AG04450 (cell line): ENCODE measurements at regions of chr6 and their contacts with region 1.

Region 1: DNA sequence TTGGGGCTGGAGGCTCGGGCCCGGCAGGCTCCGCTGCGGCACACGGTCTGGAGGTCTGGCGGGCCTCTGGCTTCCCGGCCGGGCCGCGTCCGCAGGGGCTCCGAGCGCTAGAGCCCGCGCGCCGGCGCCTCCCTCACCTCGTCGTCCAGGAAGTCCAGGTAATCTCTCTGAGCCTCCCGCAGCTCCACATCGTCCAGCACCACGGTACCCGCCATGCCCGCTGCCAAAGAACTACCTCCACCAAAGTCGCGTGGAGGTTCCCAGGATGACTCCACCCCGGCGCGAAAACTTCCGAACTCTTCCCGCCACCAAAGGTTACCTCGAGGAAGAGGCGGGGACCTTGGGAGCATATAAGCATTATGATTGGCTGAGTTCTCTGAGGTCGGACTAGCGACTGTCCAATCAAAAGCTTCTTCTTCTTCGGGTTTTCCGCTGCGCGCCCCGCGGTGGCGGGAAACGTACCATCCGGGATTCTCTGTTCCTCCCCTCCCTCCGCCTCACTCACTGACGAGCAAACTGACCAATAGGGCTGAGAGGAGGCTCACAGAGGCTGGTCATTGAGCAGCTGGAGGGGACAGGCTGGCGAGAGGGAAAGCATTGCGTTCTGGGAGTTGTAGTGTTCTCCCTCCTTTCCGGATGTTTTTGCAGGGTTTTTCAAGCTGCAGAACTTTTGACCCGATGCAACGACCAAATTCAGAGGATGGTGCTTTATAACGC is at the start of gene MCM3:
- DNase-seq: peak; percentile 98
- H3K4me3 ChIP-seq: peak within 1 kb of the TSS; percentile 83
- H3K27ac ChIP-seq: no peak within 1 kb of the TSS
- H3K27me3 ChIP-seq: no peaks in the 10 kb centered on the region
- CTCF ChIP-seq: no peak
- polyA plus RNA-seq, gene MCM3: 28.4 and 33.6 TPM in 2 replicates

Region 2: DNA sequence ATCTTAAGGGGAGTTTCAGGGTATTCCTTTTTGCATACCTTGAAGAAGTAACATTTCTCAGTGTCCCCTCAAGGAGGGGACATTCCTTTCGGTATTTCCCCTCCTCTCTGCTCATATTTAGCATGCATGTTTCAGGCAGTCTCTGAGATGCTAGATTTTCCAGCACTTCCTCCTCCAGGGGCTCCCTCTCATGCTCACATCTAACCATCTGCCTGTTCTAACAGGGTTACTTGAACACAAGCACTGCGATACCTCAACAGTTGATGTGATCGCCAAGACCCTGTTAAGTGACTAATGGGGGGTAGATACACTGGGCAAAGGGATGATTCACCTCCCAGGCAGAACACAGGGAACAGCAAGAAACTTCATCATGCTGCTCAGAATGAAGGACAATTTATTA is 12.8 kb after region 1 on chr6:
- CTCF ChIA-PET with region 1: interaction called, 10 read pairs
- POLR2A ChIA-PET with region 1: no interaction called
- DNase-seq: no peak
- H3K4me3 ChIP-seq: no peak overlapping the region
- H3K27ac ChIP-seq: no peak overlapping the region
- H3K27me3 ChIP-seq: no peaks in the 10 kb centered on the region
- CTCF ChIP-seq: no peak

Region 3: GRCh38 chr6:52352239-52353008 is 67.8 kb after region 1 on chr6:
- CTCF ChIA-PET with region 1: interaction called, 18 read pairs
- POLR2A ChIA-PET with region 1: interaction called, 6 read pairs
- DNase-seq: peak; percentile 92
- H3K4me3 ChIP-seq: peak overlapping the region; percentile 42
- H3K27ac ChIP-seq: peak overlapping the region; percentile 95
- H3K27me3 ChIP-seq: no peaks in the 10 kb centered on the region
- CTCF ChIP-seq: no peak

Region 4: DNA sequence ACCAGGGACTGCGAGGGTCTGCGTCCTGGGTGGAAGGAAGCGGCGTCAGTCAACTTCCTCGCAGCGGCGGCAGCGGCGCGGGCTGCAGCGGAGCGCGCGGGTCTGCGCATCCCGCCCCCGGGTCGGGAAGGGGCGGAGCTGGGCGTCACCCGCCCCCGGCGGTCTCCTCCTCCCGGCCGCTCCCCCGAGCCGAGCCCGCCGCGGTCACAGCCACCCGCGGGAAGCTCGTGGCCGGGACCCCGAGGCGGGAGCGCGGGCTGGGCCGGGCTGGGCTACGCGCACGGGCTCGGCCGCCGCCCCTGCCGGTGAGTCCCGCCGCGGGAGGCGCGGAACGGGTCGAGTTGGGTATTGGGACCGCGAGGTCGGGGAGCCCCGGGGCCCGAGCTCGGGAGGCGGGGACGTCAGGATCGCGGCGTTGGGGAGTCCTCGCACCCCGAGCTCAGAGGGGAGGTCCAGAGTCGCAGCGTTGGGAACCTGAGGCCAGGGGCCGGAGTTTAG is 77.4 kb after region 1 on chr6 and contains the start of gene PAQR8:
- CTCF ChIA-PET with region 1: interaction called, 26 read pairs
- POLR2A ChIA-PET with region 1: interaction called, 3 read pairs
- DNase-seq: no peak
- H3K4me3 ChIP-seq: peak within 1 kb of the TSS; percentile 77
- H3K27ac ChIP-seq: peak within 1 kb of the TSS; percentile 25
- H3K27me3 ChIP-seq: no peaks in the 10 kb centered on the region
- CTCF ChIP-seq: no peak
- polyA plus RNA-seq, gene PAQR8: 4.2 and 4.6 TPM in 2 replicates

Region 5: DNA sequence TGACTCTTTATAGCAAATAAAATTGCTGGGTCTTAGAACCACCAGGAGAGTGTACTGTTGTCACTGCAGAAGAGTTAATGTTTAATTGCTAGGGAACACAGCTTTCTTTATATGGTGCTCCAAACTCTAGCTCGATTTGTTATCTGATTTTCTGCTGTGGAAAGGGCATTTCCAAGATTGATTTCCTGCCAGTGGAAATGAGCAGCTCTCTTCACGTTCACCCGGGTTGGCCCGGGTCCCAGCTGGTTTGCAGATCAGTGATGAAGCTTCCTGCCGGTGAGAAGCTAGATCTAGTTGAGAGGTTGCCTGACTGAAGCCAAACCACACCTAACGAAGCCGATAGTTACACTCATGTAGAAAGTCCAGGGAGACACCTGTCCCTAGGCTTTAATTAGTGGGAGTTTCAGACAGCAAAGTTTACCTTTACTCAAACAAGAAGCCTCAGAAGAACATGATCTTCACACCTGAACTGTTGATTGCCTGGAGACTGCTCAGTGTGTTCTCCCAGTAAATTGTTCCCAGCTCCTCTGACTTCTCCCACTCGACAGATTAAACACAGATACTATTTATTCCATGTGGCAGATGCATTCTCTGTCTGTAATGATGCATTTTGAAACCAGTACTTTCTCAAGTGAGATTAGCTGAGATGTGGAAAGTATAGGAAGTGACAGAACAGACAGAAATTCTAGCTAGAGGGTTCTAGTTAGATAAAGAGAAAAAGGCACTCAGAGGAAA is 105.2 kb after region 1 on chr6:
- CTCF ChIA-PET with region 1: interaction called, 12 read pairs
- POLR2A ChIA-PET with region 1: no interaction called
- DNase-seq: no peak
- H3K4me3 ChIP-seq: no peak overlapping the region
- H3K27ac ChIP-seq: no peak overlapping the region
- H3K27me3 ChIP-seq: no peaks in the 10 kb centered on the region
- CTCF ChIP-seq: no peak

Region 6: GRCh38 chr6:52399511-52400312 is 115.1 kb after region 1 on chr6:
- CTCF ChIA-PET with region 1: interaction called, 214 read pairs
- POLR2A ChIA-PET with region 1: no interaction called
- DNase-seq: no peak
- H3K4me3 ChIP-seq: no peak overlapping the region
- H3K27ac ChIP-seq: no peak overlapping the region
- H3K27me3 ChIP-seq: no peaks in the 10 kb centered on the region
- CTCF ChIP-seq: peak; percentile 95

Region 7: GRCh38 chr6:52517502-52518278 is 233.1 kb after region 1 on chr6:
- CTCF ChIA-PET with region 1: no interaction called
- POLR2A ChIA-PET with region 1: no interaction called
- DNase-seq: peak; percentile 89
- H3K4me3 ChIP-seq: peak overlapping the region; percentile 38
- H3K27ac ChIP-seq: peak overlapping the region; percentile 98
- H3K27me3 ChIP-seq: no peaks in the 10 kb centered on the region
- CTCF ChIP-seq: no peak